ENCODE measurements at regions of chr18 and their contacts with region 1.

Region 1: DNA sequence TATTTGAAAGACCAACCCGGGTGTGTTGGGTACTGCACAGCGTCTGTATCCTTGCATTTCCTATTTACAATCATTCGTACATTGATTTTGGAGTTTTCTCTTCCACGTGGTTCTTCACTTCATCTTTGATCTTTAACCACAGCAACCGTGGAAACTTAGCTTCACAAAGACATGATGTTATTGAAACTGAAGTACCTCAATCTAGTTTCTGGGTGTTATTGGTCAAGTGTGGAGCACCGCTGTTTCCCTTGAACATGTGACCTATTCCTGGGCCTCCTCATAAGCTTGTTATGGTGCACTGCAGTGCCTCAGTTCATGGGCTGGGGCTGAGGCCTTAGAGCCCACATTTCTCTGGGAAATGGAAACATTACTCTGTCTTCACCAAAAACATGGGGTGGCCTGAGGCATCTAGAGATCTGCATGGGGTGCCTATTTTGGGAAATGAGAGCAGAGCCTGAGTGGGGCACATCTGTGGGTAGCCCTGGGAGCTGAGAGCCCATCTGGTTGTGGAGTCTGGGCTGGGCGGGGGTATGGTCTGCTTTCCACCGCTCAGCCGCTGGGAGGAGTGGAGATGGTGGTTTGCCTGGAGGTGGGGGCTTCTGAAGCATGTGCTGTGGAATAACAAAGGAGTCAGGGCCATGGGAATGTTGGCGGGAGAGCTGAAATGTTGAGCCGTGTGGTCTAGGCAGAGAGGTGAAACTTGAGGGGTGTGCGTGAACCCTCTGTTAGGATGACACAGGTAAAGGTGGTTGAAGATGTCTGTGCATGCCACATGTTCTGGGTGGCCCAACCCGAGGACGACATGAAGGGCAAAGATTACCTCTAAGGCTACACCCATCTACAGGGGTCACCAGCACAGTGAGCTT is 37.4 kb downstream of the ZNF236 start:
- DNase-seq: peak; percentile 35
- H3K4me3 Mint-ChIP-seq: peak overlapping the region; percentile 51
- H3K27ac Mint-ChIP-seq: peak overlapping the region; percentile 89
- H3K4me1 Mint-ChIP-seq: peaks cover 27% of the 10 kb centered on the region
- H3K27me3 Mint-ChIP-seq: no peaks in the 10 kb centered on the region

Region 2: GRCh38 chr18:76374330-76375281 is 485.1 kb before region 1 on chr18:
- intact Hi-C with region 1: loop called (anchors 1 kb)
- DNase-seq: peak; percentile 50
- H3K4me3 Mint-ChIP-seq: peak overlapping the region; percentile 8
- H3K27ac Mint-ChIP-seq: peak overlapping the region; percentile 70
- H3K4me1 Mint-ChIP-seq: peaks cover 40% of the 10 kb centered on the region
- H3K27me3 Mint-ChIP-seq: peaks cover 12% of the 10 kb centered on the region

Region 3: GRCh38 chr18:76847916-76848315 is 11.8 kb before region 1 on chr18:
- intact Hi-C with region 1: loop called (anchors 1 kb)
- DNase-seq: no peak
- H3K4me3 Mint-ChIP-seq: no peak overlapping the region
- H3K27ac Mint-ChIP-seq: no peak overlapping the region
- H3K4me1 Mint-ChIP-seq: peaks cover 19% of the 10 kb centered on the region
- H3K27me3 Mint-ChIP-seq: no peaks in the 10 kb centered on the region

Region 4: GRCh38 chr18:76875390-76876325 is 16.0 kb after region 1 on chr18:
- intact Hi-C with region 1: loop called (anchors 1 kb)
- DNase-seq: peak; percentile 14
- H3K4me3 Mint-ChIP-seq: no peak overlapping the region
- H3K27ac Mint-ChIP-seq: peak overlapping the region; percentile 59
- H3K4me1 Mint-ChIP-seq: peaks cover 17% of the 10 kb centered on the region
- H3K27me3 Mint-ChIP-seq: no peaks in the 10 kb centered on the region

Region 5: DNA sequence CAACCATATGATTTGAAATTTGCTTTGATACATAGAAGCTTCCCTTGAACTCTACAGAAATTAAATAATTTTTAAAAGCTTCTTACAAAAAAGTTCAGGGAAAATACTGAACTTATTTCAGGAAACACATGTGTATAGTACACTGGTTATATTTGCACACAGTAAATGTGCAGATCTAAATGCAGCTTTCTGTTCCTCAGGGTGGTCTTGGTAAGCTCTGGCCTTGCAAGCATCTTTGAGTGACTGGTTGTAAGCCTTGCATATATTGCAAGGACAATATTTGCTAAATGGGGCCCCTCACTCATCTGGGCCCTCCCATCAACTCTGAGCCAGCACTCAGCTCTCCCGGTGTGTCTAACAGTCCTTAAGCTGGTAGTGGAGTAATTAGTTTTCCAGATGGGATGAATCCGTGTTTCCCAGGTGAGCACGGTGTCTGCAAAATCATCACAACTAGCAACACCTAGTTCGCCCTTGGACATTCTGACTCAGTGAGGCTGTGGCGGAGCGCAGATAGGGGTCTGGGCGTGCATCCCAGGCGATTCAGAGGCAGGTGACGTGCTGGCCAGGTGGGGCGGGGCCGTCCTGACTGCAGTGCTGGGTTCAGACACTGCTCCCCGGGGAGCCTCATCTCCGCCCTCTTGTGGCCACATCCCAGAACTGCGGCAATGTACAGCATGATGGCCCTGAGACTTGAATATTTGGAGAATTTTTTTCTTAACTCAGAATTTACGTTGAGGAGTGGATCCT is 123.3 kb after region 1 on chr18:
- intact Hi-C with region 1: loop called (anchors 5 kb)
- DNase-seq: peak; percentile 77
- H3K4me3 Mint-ChIP-seq: no peak overlapping the region
- H3K27ac Mint-ChIP-seq: no peak overlapping the region
- H3K4me1 Mint-ChIP-seq: peaks cover 10% of the 10 kb centered on the region
- H3K27me3 Mint-ChIP-seq: peaks cover 2% of the 10 kb centered on the region

Region 6: DNA sequence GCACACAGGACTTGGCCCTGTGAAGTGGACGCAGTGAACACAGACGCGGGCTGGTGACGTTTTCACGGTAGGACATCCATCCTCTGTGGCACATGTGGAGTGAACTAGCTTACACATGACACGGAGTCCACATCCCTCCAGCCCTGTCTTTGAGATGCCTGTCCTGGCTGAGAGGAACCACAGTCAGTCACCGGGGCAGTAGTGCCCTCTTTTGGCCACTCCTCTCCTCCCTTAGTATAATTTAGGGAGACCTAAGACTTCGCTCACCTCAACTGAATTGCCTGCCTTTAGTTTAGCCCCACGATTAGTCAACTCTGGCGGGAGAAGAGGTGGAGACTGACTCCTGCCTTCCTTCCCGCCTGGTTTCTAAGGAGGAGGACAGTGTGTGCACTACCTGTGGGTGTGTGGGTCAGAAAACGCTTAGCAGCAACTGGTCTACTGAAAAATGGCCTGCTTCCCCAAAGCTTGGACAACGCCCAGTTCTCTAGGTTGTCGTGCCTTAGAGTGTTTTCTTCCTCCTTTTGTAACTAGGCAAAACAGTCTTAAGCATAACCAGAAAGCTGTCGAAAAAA is 202.3 kb after region 1 on chr18:
- intact Hi-C with region 1: loop called (anchors 2 kb)
- DNase-seq: peak; percentile 37
- H3K4me3 Mint-ChIP-seq: peak overlapping the region; percentile 76
- H3K27ac Mint-ChIP-seq: peak overlapping the region; percentile 97
- H3K4me1 Mint-ChIP-seq: peaks cover 85% of the 10 kb centered on the region
- H3K27me3 Mint-ChIP-seq: no peaks in the 10 kb centered on the region